PC-9 (cell line): ENCODE measurements at regions of chr10 and their contacts with region 1.

Region 1: DNA sequence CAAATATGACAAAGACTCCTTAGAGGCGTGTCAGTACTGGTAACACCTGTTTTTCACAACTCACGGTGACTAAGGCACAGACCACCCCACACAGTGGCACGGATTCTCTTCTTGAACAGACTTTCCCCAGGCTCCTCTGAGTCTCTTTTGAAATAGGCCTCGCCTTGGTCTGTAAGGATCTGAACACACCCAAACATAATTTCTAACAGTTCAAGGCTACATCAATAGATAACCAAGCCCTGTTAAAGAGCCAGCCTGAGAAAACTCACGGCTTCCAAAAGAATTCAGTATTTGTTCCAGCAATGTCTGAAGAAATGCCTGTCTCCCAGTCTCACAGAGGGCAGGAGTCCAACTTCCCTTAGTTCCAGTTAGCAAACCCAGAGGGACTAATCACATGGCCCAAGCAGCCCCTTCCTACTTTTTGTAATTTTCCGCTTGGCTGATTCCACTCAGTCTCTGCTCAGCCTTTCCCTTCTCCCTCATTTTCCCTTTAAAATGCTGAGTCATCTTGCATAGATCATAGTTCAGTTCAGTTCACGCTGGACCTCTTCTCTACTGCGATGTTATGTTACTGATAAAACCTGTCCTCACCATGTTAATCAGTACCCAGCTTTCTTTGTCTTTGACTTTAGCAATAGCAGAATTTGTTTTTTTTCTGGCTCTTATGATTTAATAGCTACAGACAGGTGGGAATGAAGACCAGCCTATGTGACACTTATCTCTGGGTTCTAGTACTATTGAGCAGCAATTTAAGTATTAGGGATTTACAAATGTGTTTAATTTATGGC is 22.6 kb upstream of the AKR1C3 start:
- DNase-seq: peak; percentile 74 to 85
- H3K4me3 ChIP-seq: peak overlapping the region; percentile 38; the same call in 1 of the 2 replicates
- H3K27ac ChIP-seq: peak overlapping the region; percentile 99
- H3K4me1 ChIP-seq: peaks cover 50% of the 10 kb centered on the region
- H3K27me3 ChIP-seq: no peaks in the 10 kb centered on the region
- CTCF ChIP-seq: no peak

Region 2: GRCh38 chr10:4708123-4708759 is 363.4 kb before region 1 on chr10:
- CTCF ChIA-PET with region 1: no interaction called
- POLR2A ChIA-PET with region 1: no interaction called
- intact Hi-C with region 1: no loop called
- DNase-seq: no peak
- H3K4me3 ChIP-seq: no peak overlapping the region
- H3K27ac ChIP-seq: no peak overlapping the region
- H3K4me1 ChIP-seq: peaks cover 16% of the 10 kb centered on the region
- H3K27me3 ChIP-seq: no peaks in the 10 kb centered on the region
- CTCF ChIP-seq: no peak

Region 3: GRCh38 chr10:5023177-5023805 is 48.3 kb before region 1 on chr10:
- CTCF ChIA-PET with region 1: no interaction called
- POLR2A ChIA-PET with region 1: interaction called, 4 read pairs
- intact Hi-C with region 1: loop called (anchors 1 kb)
- DNase-seq: no peak
- H3K4me3 ChIP-seq: no peak overlapping the region
- H3K27ac ChIP-seq: peak overlapping the region; percentile 100
- H3K4me1 ChIP-seq: peaks cover 79% of the 10 kb centered on the region
- H3K27me3 ChIP-seq: no peaks in the 10 kb centered on the region
- CTCF ChIP-seq: no peak

Region 4: DNA sequence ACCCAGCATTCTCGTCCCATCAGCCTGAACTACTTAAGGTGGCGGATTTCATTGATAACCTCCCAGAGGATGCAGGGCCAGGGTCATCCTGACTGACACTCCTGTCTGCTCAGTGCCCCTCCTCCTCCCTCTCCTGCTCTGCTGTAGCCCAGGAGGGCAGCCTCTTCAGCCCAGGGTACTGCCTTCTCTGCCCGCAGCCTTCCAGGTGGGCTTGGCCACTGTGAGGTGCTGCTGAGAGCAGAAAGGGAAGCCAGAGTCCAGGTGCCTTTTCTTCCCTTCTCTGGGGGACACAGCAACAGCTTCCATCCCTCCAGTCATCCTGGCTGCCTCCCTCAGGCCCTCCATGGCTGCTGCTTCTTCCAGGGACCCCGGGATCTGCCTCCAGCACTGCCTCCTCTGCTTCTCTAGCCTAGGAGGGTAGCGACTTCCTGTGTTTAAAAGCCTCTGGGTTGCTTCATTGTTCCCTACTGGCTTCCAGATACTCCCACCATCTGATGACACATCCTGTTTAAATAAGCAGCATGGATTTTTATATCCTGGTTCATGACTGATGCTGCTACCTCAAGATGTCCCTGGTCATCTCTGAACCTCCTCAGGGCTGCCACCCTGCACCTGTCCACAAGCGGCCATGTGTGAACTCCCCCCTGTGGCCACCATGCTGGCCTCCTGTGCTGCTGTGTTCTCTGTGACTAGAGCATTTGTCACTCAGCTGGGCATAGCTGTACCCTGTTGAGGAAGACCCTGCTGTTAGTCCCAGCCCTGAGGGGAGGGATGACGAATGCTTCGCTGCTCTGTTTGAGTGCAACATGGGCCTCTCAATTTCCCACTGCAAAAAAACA is 180.8 kb after region 1 on chr10:
- CTCF ChIA-PET with region 1: no interaction called
- POLR2A ChIA-PET with region 1: no interaction called
- intact Hi-C with region 1: no loop called
- DNase-seq: peak; percentile 8 to 42
- H3K4me3 ChIP-seq: no peak overlapping the region
- H3K27ac ChIP-seq: no peak overlapping the region
- H3K4me1 ChIP-seq: no peaks in the 10 kb centered on the region
- H3K27me3 ChIP-seq: no peaks in the 10 kb centered on the region
- CTCF ChIP-seq: no peak